Activated B cell treated with CpG ODN at 0.5 μM for 24 hours (primary cell): ENCODE measurements at regions of chr7 and their contacts with region 1.

Region 1: DNA sequence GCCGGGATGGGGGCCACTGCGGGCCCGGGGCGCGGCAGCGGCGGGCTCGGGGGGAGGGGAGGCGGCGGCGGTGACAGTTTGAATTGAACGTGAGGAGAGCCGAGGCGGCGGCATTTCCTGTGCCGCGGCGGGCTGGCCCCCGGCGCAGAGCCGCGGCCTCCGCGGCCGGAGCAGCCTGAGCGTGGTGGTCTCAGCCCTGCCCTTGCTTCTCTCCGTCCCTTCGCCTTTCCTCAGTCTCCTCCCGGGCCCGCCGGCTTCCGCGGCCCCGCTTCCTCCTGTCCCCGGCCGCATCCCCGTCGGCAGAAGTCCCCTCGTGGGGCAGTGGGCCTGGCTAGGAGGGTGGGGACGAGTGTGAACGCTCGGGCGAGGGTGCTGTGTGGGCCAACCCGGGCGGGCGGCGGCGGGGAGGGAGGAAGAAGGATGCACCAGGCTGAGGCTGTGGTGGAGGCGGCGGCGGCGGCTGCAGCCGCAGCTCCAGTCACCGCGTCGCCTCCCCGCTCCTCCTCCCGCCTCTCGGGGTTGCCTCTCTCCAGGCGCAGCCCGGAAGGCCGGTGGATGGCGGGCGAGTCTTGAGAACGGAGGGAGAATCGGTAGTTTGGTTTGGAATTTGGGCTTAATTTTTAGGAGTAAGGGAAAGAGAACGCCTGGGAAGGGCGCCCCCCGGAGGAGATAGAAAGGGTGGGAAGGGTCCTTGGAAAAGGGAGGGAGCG is 690 bp downstream of the SEPTIN7 start:
- DNase-seq: peak; percentile 73
- ATAC-seq: peak; percentile 35
- H3K4me3 Mint-ChIP-seq: peak overlapping the region; percentile 96
- H3K27ac Mint-ChIP-seq: peak overlapping the region; percentile 99
- H3K4me1 Mint-ChIP-seq: peaks cover 57% of the 10 kb centered on the region
- H3K27me3 Mint-ChIP-seq: no peaks in the 10 kb centered on the region
- CTCF ChIP-seq: no peak

Region 2: GRCh38 chr7:35565927-35566326 is 235.6 kb before region 1 on chr7:
- CTCF ChIA-PET with region 1: no interaction called
- POLR2A ChIA-PET with region 1: no interaction called
- intact Hi-C with region 1: no loop called
- DNase-seq: no peak
- ATAC-seq: no peak
- H3K4me3 Mint-ChIP-seq: no peak overlapping the region
- H3K27ac Mint-ChIP-seq: no peak overlapping the region
- H3K4me1 Mint-ChIP-seq: peaks cover 15% of the 10 kb centered on the region
- H3K27me3 Mint-ChIP-seq: peaks cover 9% of the 10 kb centered on the region
- CTCF ChIP-seq: no peak

Region 3: GRCh38 chr7:35694781-35695472 is 106.6 kb before region 1 on chr7 and contains the start of gene HERPUD2:
- CTCF ChIA-PET with region 1: interaction called, 9 read pairs
- POLR2A ChIA-PET with region 1: interaction called, 79 read pairs
- intact Hi-C with region 1: loop called (anchors 1 kb)
- DNase-seq: peak; percentile 88
- ATAC-seq: peak; percentile 90
- H3K4me3 Mint-ChIP-seq: peak within 1 kb of the TSS; percentile 95
- H3K27ac Mint-ChIP-seq: peak within 1 kb of the TSS; percentile 92
- H3K4me1 Mint-ChIP-seq: peaks cover 61% of the 10 kb centered on the region
- H3K27me3 Mint-ChIP-seq: no peaks in the 10 kb centered on the region
- CTCF ChIP-seq: no peak
- total RNA-seq, gene HERPUD2: 26.2 and 31.5 TPM in 2 replicates

Region 4: DNA sequence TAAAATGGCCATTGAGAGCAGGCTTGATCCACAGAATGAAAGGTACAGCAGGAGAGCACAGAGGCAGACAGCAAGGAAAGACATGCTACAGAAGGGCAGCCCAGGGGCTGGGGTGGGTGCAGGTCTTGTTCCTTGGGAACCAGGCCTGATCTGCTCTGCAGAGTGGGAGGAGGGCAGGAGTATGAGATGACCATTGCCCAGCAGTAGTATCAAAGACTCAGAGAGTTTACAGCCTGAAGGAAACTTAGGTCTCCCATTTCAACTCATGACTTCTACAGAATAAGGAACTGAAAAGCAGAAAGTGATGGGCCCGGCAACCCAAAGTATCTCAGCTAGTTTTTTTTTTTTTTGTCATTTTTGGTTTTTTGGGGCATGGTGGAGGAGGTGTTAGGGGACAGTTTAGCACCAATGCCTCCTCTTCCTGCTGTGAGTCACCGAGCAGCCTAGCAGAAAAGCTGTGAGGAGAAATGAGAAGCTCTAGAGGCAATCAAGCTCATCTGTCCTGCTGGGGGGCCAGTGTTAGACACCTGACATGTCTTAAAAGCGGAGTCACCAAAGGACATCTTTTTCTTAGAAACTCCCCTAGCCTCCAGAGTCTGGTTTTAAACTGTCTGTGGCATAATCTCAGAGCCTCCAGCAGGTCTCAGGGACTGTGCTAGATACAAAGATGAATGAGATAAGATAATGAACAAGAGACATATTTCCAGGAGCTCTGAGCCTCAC is 72.3 kb before region 1 on chr7:
- CTCF ChIA-PET with region 1: interaction called, 59 read pairs
- POLR2A ChIA-PET with region 1: interaction called, 442 read pairs
- intact Hi-C with region 1: loop called (anchors 1 kb)
- DNase-seq: peak; percentile 53
- ATAC-seq: peak; percentile 81
- H3K4me3 Mint-ChIP-seq: peak overlapping the region; percentile 70
- H3K27ac Mint-ChIP-seq: peak overlapping the region; percentile 93
- H3K4me1 Mint-ChIP-seq: peaks cover 93% of the 10 kb centered on the region
- H3K27me3 Mint-ChIP-seq: no peaks in the 10 kb centered on the region
- CTCF ChIP-seq: no peak

Region 5: GRCh38 chr7:35753761-35754603 is 47.6 kb before region 1 on chr7:
- CTCF ChIA-PET with region 1: no interaction called
- POLR2A ChIA-PET with region 1: no interaction called
- intact Hi-C with region 1: no loop called
- DNase-seq: no peak
- ATAC-seq: no peak
- H3K4me3 Mint-ChIP-seq: no peak overlapping the region
- H3K27ac Mint-ChIP-seq: no peak overlapping the region
- H3K4me1 Mint-ChIP-seq: peaks cover 7% of the 10 kb centered on the region
- H3K27me3 Mint-ChIP-seq: no peaks in the 10 kb centered on the region
- CTCF ChIP-seq: no peak

Region 6: DNA sequence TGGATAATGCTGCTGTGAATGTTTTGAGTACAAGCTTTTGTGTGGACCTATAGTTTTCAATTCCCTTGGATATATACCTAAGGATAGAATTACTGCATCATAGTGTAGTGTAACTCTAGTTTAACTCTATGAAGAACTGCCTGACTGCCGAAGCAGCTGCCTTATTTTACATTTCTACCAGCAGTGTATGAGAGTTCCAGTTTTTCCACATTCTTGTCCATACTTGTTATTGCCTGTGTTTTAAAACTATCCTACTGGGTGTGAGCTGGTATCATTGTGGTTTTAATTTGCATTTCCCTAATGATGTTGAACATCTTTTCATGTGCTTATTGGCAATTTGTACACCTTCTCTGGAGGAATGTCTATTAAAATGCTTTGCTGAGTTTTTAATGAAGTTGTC is 15.0 kb after region 1 on chr7:
- CTCF ChIA-PET with region 1: no interaction called
- POLR2A ChIA-PET with region 1: interaction called, 31 read pairs
- intact Hi-C with region 1: loop called (anchors 2 kb)
- DNase-seq: no peak
- ATAC-seq: no peak
- H3K4me3 Mint-ChIP-seq: no peak overlapping the region
- H3K27ac Mint-ChIP-seq: no peak overlapping the region
- H3K4me1 Mint-ChIP-seq: peaks cover 84% of the 10 kb centered on the region
- H3K27me3 Mint-ChIP-seq: no peaks in the 10 kb centered on the region
- CTCF ChIP-seq: no peak

Region 7: DNA sequence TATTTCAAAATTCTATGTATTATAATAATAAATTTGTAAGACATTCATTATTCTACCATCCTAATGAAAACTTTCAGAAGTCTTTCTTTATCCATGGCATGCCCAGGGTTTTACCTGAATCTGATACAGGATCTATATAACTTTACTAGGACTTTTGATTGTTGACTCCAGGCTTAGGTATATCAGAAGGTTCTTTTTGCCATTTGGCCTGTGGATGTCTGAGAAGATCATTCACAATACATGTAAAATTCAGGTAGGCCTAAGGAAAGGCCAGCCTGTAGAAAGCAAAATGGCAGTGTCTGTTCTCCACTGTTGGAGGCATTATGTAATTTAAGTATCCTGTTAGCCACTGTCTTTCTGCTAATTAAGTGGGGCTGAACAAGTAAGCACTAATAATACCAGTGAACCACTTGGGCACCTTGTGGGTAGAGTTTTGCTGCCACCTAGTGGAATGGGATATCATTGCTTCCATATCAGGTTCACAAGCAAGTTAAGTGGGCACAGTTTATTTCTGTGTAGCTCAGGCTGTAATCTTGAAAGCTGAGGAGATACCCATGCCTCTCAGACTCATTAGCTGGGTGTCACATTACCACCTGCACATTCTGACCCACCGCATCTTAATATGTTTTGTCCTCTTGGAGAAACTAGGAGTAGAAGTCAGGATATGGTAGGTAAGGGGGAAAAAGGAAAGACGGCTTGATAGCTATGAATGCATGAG is 104.8 kb after region 1 on chr7:
- CTCF ChIA-PET with region 1: interaction called, 6 read pairs
- POLR2A ChIA-PET with region 1: interaction called, 3 read pairs
- intact Hi-C with region 1: loop called (anchors 1 kb)
- DNase-seq: no peak
- ATAC-seq: peak; percentile 96
- H3K4me3 Mint-ChIP-seq: no peak overlapping the region
- H3K27ac Mint-ChIP-seq: peak overlapping the region; percentile 41
- H3K4me1 Mint-ChIP-seq: peaks cover 3% of the 10 kb centered on the region
- H3K27me3 Mint-ChIP-seq: no peaks in the 10 kb centered on the region
- CTCF ChIP-seq: peak; percentile 11